ENCODE measurements at regions of chr17 and their contacts with region 1.

Region 1: DNA sequence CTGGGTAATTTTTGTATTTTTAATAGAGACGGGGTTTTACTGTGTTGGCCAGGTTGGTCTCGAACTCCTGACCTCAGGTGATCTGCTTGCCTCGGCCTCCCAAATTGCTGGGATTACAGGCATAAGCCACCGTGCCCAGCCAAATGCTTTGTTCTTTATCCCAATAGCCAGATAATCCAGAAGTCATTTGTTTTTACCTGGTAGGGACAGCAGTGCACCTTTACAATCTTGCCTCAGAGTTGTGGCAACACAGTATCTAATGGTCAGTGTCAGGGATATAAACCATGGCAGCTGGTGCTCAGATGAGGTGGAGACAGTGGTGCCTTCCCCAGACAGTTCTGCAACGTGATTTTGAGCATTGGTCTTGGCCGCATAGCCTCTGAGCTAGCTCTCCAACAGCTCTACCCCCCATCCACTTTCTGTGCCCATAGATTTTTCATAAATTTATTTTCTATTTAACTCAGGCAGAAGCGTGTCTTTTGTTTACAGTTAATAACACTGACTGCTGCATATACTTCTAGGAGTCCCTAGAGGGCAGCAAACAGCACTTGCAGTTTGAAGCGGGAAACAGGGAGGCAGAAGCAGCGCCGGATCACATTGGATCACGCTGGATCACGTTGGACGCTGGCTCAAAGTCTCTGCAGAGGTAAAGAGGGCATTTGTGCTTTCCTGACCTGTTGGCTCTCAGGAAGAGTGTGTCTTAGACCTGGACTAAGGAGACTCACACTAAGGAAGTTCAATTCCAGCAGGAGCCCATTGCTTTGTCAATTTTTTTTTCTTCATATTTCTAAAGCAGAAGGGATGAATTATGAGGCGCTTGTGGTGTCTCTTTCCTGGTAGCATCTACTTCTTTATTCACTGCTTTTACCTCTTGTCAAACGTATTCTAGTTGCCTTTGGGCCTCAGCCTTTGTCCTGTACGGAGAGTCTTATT is 5.1 kb upstream of the GGT6 start:
- DNase-seq: peak; percentile 77
- H3K4me3 ChIP-seq: peak overlapping the region in 1 of 8 donors; percentile 14
- H3K27ac ChIP-seq: peak overlapping the region in 1 of 8 donors; percentile 30
- H3K4me1 ChIP-seq: peaks cover 6 to 42% (median 25%) of the 10 kb centered on the region in 6 donors
- H3K27me3 ChIP-seq: no peaks in the 10 kb centered on the region
- CTCF ChIP-seq: peak; percentile 37 to 85 (median 75)
- POLR2A ChIP-seq: no peak

Region 2: DNA sequence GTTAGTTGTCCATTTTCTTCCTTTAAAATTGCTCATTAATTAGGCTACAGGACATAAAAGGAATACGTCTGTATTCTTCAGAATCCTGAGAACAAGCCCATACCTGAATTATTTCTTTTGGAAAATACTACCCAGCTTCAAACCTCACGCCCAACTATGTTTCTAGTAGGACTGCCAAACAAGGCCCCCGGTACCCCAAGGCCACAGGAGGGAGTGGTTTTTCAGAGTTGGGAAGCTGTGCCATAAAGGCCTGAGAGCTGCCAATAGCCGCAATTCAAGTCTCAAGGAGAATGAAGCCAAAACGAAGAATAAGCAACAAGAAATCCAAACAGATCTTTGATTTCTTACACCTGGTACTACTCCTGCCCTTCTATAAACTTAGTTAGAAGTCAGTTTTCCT is 247.3 kb before region 1 on chr17:
- intact Hi-C with region 1: no loop called
- DNase-seq: no peak
- H3K4me3 ChIP-seq: no peak overlapping the region
- H3K27ac ChIP-seq: peak overlapping the region in 3 of 8 donors; percentile 0 to 22 (median 16)
- H3K4me1 ChIP-seq: peaks cover 2 to 82% (median 26%) of the 10 kb centered on the region in 6 donors
- H3K27me3 ChIP-seq: no peaks in the 10 kb centered on the region
- CTCF ChIP-seq: no peak
- POLR2A ChIP-seq: no peak

Region 3: DNA sequence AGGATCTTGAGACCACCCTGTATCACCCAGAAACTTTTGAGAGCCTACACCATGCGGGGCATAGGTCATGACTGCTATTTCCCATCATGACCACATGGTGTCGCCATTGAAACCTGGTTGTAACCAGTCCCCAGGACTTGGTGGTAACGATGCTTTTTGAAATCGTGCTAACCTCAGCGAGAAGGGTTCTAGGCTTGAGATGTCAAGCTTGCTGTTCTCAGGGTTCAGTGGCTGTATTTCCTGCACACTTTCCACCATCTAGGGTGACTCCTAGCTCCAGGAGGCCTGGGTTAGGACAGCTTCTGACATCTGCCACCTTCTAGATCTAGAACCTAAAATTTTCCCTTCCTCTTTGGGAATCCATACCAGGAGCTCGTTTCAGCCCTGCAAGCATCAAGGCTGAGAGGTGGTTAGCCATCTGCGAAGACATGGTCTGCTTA is 144.8 kb before region 1 on chr17:
- intact Hi-C with region 1: loop called (anchors 10 kb)
- DNase-seq: no peak
- H3K4me3 ChIP-seq: no peak overlapping the region
- H3K27ac ChIP-seq: no peak overlapping the region
- H3K4me1 ChIP-seq: peaks cover 0 to 13% (median 7%) of the 10 kb centered on the region in 6 donors
- H3K27me3 ChIP-seq: no peaks in the 10 kb centered on the region
- CTCF ChIP-seq: peak; percentile 82 to 93 (median 87)
- POLR2A ChIP-seq: no peak

Region 4: GRCh38 chr17:4625181-4625617 is 59.7 kb after region 1 on chr17:
- intact Hi-C with region 1: loop called (anchors 5 kb)
- DNase-seq: no peak
- H3K4me3 ChIP-seq: no peak overlapping the region
- H3K27ac ChIP-seq: no peak overlapping the region
- H3K4me1 ChIP-seq: peaks cover 0 to 12% (median 0%) of the 10 kb centered on the region in 6 donors
- H3K27me3 ChIP-seq: peaks cover 0 to 4% (median 0%) of the 10 kb centered on the region in 7 donors
- CTCF ChIP-seq: no peak
- POLR2A ChIP-seq: no peak

Region 5: DNA sequence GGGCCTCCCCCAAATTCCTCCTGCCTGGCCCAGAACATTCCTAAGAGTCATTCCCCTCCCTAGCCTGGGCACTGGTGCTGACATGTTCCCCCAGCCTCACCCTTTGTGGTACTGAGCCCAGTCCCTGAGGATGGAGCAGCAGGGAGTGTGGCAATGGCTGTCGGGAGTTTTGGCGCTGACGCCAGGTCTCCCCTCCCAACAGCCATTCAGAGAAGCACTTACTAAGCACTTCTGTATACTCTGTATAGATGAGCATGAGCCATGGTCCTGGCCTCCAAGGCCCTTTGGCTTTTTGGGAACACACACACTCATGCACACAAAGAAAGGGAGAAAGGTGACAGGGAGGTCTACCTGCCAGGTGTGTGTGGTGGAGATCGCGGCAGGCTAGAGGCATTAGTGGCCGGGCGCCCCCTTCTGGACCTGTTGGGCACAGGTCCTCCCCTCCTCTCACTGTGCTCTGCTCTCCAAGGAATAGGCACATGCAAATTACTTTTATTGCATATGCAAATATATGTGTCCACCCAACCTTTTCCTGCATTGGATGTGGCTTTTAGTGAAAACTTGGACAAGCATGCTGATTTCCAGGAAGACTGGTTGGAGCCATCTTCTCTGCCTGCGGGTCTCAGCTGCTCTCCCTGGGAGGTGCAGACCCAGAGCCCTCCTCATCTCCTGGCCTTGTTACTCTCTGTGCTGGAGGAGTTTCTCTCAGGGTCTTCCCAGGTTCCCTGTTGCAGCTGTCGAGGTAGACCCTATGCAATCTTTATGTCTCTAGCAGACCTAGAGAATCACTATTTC is 316.5 kb after region 1 on chr17:
- intact Hi-C with region 1: loop called (anchors 10 kb)
- DNase-seq: peak; percentile 90
- H3K4me3 ChIP-seq: no peak overlapping the region
- H3K27ac ChIP-seq: no peak overlapping the region
- H3K4me1 ChIP-seq: peaks cover 0 to 29% (median 8%) of the 10 kb centered on the region in 6 donors
- H3K27me3 ChIP-seq: no peaks in the 10 kb centered on the region
- CTCF ChIP-seq: peak; percentile 66 to 90 (median 79)
- POLR2A ChIP-seq: no peak

Measured in spleen (tissue), 13 donors.